ENCODE measurements at regions of chr3 and their contacts with region 1.

Region 1: DNA sequence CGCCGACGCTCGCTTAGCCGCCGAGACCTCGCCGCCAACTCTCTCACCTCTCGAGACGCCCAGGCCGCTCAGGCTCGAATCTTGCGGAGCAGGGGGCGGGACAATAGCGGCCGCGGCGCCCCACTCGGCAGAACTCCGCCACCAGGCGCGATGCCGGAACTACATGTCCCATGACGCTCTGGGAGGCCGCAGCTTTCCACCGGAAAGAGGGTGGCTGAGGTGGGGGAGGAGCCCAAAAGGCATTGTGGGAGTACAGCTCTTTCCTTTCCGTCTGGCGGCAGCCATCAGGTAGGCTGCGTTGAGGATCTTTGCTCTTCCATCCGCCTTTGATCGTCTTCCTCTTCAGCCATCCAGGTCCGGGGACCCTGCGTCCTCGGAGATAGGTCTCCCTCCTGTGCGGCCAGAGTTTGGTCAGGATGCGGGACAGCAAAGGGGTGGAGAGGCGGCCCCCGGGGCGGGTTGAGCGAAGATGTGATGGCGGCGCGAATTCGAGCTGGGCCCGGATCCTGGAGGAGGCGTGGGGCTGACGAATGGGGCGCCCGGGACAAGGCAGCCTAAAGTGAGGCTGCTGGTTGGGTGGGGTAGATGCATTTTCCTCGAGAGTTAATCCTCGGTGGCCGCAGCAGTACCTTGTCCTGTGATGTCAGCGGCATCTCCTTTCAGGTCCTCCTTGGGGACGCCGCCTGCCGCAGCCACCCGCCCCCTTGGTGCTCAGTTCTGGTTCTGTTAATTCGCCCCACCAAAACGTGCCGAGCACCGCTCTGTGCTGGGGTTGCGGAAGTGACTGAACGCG is at the starts of genes NKIRAS1 and RPL15:
- DNase-seq: peak; percentile 92 to 93
- H3K4me3 ChIP-seq: peak within 1 kb of the TSS; percentile 86 to 99 (median 92)
- H3K27ac ChIP-seq: peak within 1 kb of the TSS; percentile 96
- H3K4me1 ChIP-seq: peaks cover 5 to 8% (median 6%) of the 10 kb centered on the region in 4 experiments; a peak in 5 of 7 replicates
- H3K27me3 ChIP-seq: no peaks in the 10 kb centered on the region; a peak in 1 of 7 replicates
- CTCF ChIP-seq: peak in 1 of 3 experiments; percentile 27; a peak in 1 of 4 replicates
- EP300 ChIP-seq: no peak; a peak in 1 of 3 replicates
- POLR2A ChIP-seq: peak; percentile 99 to 100
- RAD21 ChIP-seq: no peak
- total RNA-seq, gene NKIRAS1: 7.0 and 7.6 TPM in 2 replicates
- total RNA-seq, gene RPL15: 2,767 and 2,819 TPM in 2 replicates

Region 2: DNA sequence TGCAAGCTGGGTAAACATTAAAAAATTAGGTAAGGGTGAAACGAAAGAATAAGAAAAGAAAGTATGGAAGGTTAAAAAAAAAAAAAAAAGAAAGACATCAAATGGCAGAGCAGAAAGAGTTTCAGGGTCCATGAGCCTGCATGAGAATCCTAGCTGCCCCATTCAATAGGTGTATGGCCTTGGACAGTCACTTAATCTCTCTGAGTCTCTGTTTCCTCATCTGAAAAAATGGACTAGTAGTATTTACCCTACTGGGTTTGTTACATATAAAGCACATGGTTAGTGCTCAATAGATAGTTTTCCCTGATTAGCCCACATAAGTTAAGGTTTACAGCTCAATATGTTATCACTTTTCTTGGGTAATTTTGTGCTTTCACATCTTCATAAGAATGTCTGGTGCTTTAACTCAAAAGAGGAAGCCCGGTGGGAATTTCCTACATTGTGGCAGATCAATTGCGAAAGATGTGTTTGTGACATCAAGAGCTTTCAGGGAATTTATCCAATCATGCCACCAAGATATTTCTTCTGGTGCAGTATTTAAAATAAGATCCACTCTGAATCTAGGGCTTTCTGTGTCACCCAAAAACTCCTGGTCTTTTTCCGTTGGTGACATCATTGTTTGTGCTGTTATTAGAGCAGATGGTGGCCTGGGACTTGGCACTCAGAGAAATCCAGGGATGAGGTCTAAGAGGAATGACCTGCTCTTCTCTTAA is 168.5 kb before region 1 on chr3:
- CTCF ChIA-PET with region 1: no interaction called
- POLR2A ChIA-PET with region 1: interaction called, 13 read pairs
- DNase-seq: no peak
- H3K4me3 ChIP-seq: no peak overlapping the region
- H3K27ac ChIP-seq: no peak overlapping the region
- H3K4me1 ChIP-seq: peaks cover 14 to 25% (median 19%) of the 10 kb centered on the region in 4 experiments
- H3K27me3 ChIP-seq: peaks cover 3 to 20% (median 16%) of the 10 kb centered on the region in 4 experiments
- CTCF ChIP-seq: no peak
- EP300 ChIP-seq: no peak
- POLR2A ChIP-seq: no peak
- RAD21 ChIP-seq: no peak

Region 3: GRCh38 chr3:23834082-23834870 is 82.8 kb before region 1 on chr3:
- CTCF ChIA-PET with region 1: interaction called, 4 read pairs
- POLR2A ChIA-PET with region 1: interaction called, 20 read pairs
- DNase-seq: no peak
- H3K4me3 ChIP-seq: no peak overlapping the region
- H3K27ac ChIP-seq: no peak overlapping the region
- H3K4me1 ChIP-seq: no peaks in the 10 kb centered on the region; a peak in 2 of 7 replicates
- H3K27me3 ChIP-seq: no peaks in the 10 kb centered on the region
- CTCF ChIP-seq: no peak
- EP300 ChIP-seq: no peak
- POLR2A ChIP-seq: no peak
- RAD21 ChIP-seq: peak; percentile 41 to 44

Region 4: DNA sequence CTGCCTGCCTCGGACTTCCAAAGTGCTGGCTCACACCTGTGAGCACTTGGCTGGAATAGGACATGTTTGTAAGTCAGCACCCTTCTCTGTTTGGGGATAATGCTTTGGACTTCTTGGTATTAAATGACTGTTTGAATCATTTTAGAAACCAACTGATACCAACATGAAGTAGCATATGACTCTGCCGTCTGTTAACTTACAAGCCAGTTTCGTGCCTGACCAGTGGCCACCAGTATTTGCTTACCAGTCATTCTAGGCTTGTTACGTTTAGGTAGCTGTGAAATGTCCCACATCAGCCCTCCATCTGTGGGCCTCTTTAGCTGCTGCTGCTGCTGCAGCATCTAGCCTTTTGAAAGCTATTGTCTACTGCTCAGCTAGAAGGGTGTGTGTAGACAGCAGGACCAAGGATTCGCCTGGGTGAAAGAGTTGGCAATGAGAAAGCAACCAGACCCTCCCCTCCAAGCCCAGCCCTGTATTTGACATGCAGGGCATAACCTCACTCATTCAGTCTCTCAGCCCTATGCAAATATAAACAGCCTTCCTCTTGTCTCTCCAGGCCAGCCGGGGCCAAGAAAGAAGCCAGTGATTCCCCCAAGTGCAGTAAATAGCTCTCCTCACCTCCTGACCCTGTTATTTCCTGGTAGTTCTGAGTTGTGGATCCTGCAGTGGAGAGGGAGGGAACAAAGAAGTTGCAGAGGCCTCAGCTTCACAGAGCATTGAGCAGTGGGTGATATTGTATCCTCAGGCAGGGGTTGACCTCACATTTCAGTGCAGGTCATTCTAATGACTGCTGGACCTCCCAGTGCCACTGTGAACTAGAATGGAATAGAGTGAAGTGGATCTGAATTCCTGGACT is 51.3 kb before region 1 on chr3:
- CTCF ChIA-PET with region 1: interaction called, 4 read pairs
- POLR2A ChIA-PET with region 1: interaction called, 18 read pairs
- DNase-seq: peak in 1 of 2 experiments; percentile 21
- H3K4me3 ChIP-seq: no peak overlapping the region
- H3K27ac ChIP-seq: no peak overlapping the region
- H3K4me1 ChIP-seq: peaks cover 5 to 16% (median 10%) of the 10 kb centered on the region in 4 experiments
- H3K27me3 ChIP-seq: peaks cover 0 to 1% (median 0%) of the 10 kb centered on the region in 4 experiments; a peak in 1 of 7 replicates
- CTCF ChIP-seq: no peak
- EP300 ChIP-seq: no peak
- POLR2A ChIP-seq: 0 out of 3 replicates have a peak, but pooled peaks of 1 of the 2 experiments have one; percentile 14
- RAD21 ChIP-seq: 0 out of 4 replicates have a peak, but pooled peaks of 1 of the 2 experiments have one; percentile 5

Region 5: DNA sequence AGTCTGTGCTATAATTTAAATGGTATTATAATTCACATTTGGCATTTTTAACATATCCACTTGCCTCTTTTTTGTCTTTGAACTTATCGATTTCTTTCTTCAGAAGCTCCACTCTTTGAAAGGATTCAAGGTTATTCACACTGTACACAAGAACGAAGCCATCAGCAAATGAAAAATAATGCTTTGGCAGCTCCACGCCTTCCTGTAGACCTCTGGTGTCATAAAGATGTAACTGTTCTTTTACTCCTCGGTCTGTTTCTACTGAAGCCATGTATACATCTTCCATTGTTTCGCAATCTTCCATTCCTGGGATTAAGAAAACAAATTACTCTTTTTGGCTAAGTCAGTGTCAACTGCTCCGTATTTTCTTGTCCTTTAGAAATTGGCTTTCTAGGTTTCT is 16.3 kb before region 1 on chr3:
- CTCF ChIA-PET with region 1: no interaction called
- POLR2A ChIA-PET with region 1: interaction called, 81 read pairs
- DNase-seq: no peak
- H3K4me3 ChIP-seq: no peak overlapping the region
- H3K27ac ChIP-seq: no peak overlapping the region
- H3K4me1 ChIP-seq: no peaks in the 10 kb centered on the region
- H3K27me3 ChIP-seq: peaks cover 0 to 1% (median 0%) of the 10 kb centered on the region in 4 experiments; a peak in 1 of 7 replicates
- CTCF ChIP-seq: no peak
- EP300 ChIP-seq: no peak
- POLR2A ChIP-seq: no peak
- RAD21 ChIP-seq: no peak

Region 6: GRCh38 chr3:23959135-23959900 is 42.2 kb after region 1 on chr3:
- CTCF ChIA-PET with region 1: interaction called, 3 read pairs
- POLR2A ChIA-PET with region 1: interaction called, 18 read pairs
- DNase-seq: no peak
- H3K4me3 ChIP-seq: no peak overlapping the region
- H3K27ac ChIP-seq: no peak overlapping the region
- H3K4me1 ChIP-seq: no peaks in the 10 kb centered on the region
- H3K27me3 ChIP-seq: no peaks in the 10 kb centered on the region
- CTCF ChIP-seq: no peak
- EP300 ChIP-seq: no peak
- POLR2A ChIP-seq: no peak
- RAD21 ChIP-seq: no peak

Measured in H1 (cell line).